B cell (primary cell): ENCODE measurements at regions of chr2 and their contacts with region 1.

Region 1: GRCh38 chr2:96174251-96175144 is 29.3 kb upstream of the DUSP2 start:
- DNase-seq: peak; percentile 85
- ATAC-seq: peak; percentile 99
- H3K4me3 ChIP-seq: no peak overlapping the region
- H3K4me3 Mint-ChIP-seq: no peak overlapping the region
- H3K27ac ChIP-seq: no peak overlapping the region
- H3K27ac Mint-ChIP-seq: no peak overlapping the region
- H3K4me1 ChIP-seq: peaks cover 0 to 3% of the 10 kb centered on the region in 2 donors
- H3K4me1 Mint-ChIP-seq: peaks cover 7% of the 10 kb centered on the region
- H3K27me3 ChIP-seq: no peaks in the 10 kb centered on the region
- H3K27me3 Mint-ChIP-seq: no peaks in the 10 kb centered on the region
- CTCF ChIP-seq: peak; percentile 99

Region 2: DNA sequence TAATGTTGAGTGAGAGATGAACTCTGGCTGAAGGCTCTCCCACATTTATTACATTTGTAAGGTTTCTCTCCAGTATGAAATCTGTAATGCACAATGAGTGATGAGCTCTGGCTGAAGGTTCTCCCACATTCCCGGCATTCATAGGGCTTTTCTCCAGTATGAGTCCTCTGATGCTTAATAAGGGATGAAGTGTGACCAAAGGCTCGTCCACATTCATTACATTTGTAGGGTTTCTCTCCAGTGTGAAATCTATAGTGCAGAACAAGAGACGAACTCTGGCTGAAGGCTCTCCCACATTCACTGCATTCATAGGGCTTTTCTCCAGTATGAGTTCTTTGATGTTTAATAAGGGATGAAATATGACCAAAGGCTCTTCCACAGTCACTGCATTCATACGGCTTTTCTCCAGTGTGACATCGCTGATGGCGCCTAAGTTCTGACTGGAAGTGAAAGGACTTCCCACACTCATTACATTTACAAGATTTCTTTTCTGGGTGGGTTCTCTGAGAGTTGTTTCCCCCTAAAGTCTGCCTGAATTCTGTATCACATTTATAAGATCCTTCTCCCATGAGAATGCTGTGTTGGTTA is 1025.0 kb before region 1 on chr2:
- CTCF ChIA-PET with region 1: no interaction called
- POLR2A ChIA-PET with region 1: no interaction called
- intact Hi-C with region 1: no loop called
- DNase-seq: no peak
- ATAC-seq: no peak
- H3K4me3 ChIP-seq: no peak overlapping the region
- H3K4me3 Mint-ChIP-seq: no peak overlapping the region
- H3K27ac ChIP-seq: no peak overlapping the region
- H3K27ac Mint-ChIP-seq: no peak overlapping the region
- H3K4me1 ChIP-seq: no peaks in the 10 kb centered on the region
- H3K4me1 Mint-ChIP-seq: no peaks in the 10 kb centered on the region
- H3K27me3 ChIP-seq: no peaks in the 10 kb centered on the region
- H3K27me3 Mint-ChIP-seq: no peaks in the 10 kb centered on the region
- CTCF ChIP-seq: no peak

Region 3: GRCh38 chr2:96024336-96025193 is 149.9 kb before region 1 on chr2:
- CTCF ChIA-PET with region 1: interaction called, 18 read pairs
- POLR2A ChIA-PET with region 1: no interaction called
- intact Hi-C with region 1: no loop called
- DNase-seq: no peak
- ATAC-seq: no peak
- H3K4me3 ChIP-seq: no peak overlapping the region
- H3K4me3 Mint-ChIP-seq: no peak overlapping the region
- H3K27ac ChIP-seq: no peak overlapping the region
- H3K27ac Mint-ChIP-seq: no peak overlapping the region
- H3K4me1 ChIP-seq: no peaks in the 10 kb centered on the region
- H3K4me1 Mint-ChIP-seq: peaks cover 3% of the 10 kb centered on the region
- H3K27me3 ChIP-seq: no peaks in the 10 kb centered on the region
- H3K27me3 Mint-ChIP-seq: no peaks in the 10 kb centered on the region
- CTCF ChIP-seq: no peak

Region 4: DNA sequence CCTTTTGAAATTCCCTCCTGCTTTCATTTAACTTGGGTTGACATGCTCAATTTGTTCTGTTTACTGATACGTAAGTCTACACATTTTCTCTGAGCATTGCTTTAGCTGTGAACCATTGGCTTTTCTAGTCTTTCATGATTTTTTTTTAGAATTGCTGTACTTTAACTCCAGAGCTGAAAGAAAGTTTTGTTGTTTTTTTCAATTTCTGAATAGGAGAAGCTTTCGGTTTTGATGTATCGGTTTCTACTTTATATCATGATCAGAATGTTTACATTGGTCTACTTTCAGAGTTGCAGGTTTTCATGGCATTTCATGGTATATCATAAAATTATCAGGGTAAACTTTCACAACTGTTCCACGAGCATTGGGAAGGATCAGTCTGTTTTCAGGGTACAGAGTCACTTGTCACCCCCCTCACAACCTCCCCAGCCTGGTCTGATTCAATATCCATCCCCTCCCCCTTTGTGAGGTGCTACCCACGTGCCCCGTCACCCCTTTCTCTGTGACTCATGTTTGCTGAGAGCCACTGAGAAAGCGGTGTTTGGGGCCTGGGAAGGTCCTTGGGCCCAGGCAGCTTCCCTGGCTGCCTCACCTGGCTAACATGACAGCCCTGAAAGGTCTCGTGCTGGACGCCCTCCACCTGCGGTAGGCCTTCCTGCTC is 43.2 kb before region 1 on chr2:
- CTCF ChIA-PET with region 1: interaction called, 1,065 read pairs
- POLR2A ChIA-PET with region 1: no interaction called
- intact Hi-C with region 1: no loop called
- DNase-seq: no peak
- ATAC-seq: no peak
- H3K4me3 ChIP-seq: no peak overlapping the region
- H3K4me3 Mint-ChIP-seq: no peak overlapping the region
- H3K27ac ChIP-seq: no peak overlapping the region
- H3K27ac Mint-ChIP-seq: no peak overlapping the region
- H3K4me1 ChIP-seq: no peaks in the 10 kb centered on the region
- H3K4me1 Mint-ChIP-seq: no peaks in the 10 kb centered on the region
- H3K27me3 ChIP-seq: no peaks in the 10 kb centered on the region
- H3K27me3 Mint-ChIP-seq: no peaks in the 10 kb centered on the region
- CTCF ChIP-seq: no peak

Region 5: DNA sequence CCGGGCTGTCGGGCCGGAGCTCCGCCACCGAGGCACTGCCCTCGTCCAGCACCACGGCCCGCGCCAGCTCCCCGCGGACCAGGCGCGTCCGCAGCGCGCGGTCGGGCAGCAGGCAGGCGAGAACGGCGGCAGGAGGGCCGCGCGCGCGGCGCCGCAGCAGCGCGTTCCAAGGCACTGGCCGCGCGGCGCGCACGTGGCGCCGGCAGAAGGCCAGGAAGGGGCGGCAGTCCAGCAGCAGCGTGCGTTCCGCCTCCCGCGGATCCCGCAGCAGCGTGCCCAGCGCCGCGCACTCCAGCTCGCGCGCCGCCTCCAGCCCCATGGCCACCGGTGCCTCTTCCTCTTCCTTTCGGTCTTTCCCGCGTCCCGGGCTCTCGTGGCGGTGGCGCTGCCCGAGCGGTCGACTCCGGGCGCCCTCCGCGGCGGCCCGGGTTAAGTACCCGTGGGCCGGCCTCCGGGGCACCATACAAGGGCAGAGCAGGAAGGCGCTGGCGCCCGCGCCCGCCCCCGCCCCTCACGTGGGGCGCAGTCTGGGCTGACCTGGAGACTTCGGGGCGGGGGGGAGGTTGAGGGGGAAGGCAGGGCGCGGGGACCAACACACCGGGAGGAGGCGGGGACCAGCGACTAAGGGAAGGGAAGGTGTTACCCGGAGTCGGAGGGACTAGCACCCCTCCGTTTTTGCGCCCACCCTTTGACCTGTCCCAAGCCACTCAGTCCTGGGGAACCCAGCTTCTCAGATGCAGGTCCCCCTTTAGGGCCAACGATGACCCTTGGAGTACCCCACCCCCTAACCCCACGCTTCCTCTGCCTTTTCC is 29.3 kb before region 1 on chr2 and contains the start of gene DUSP2:
- CTCF ChIA-PET with region 1: interaction called, 1,065 read pairs
- POLR2A ChIA-PET with region 1: interaction called, 7 read pairs
- intact Hi-C with region 1: no loop called
- DNase-seq: peak; percentile 95
- ATAC-seq: peak; percentile 56
- H3K4me3 ChIP-seq: peak within 1 kb of the TSS; percentile 42 to 71 (median 59)
- H3K4me3 Mint-ChIP-seq: peak within 1 kb of the TSS; percentile 92
- H3K27ac ChIP-seq: peak within 1 kb of the TSS; percentile 95 to 97
- H3K27ac Mint-ChIP-seq: peak within 1 kb of the TSS; percentile 98
- H3K4me1 ChIP-seq: peaks cover 53 to 66% of the 10 kb centered on the region in 2 donors
- H3K4me1 Mint-ChIP-seq: peaks cover 69% of the 10 kb centered on the region
- H3K27me3 ChIP-seq: no peaks in the 10 kb centered on the region
- H3K27me3 Mint-ChIP-seq: no peaks in the 10 kb centered on the region
- CTCF ChIP-seq: no peak
- total RNA-seq, gene DUSP2: 69.8 and 74.9 TPM in 2 replicates

Region 6: DNA sequence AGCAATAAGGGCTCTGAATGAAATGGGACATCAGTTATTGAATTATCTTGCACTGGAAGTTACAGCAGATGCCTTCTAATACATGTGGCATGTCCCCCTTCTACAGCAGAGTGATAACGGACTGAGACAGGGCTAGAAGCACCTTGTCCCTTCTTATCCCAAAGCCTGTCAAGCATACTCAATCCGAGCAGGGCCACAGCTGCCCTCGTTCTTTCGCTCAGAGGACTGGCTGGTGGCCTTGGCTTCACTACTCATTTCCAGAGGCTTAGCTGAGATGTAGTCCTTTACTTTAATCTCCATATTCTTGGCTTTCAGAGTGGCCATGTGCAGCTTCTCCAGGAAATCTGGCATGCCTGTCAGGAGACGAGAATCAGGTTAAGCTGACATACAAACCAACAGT is 12.1 kb after region 1 on chr2:
- CTCF ChIA-PET with region 1: interaction called, 13 read pairs
- POLR2A ChIA-PET with region 1: interaction called, 9 read pairs
- intact Hi-C with region 1: no loop called
- DNase-seq: no peak
- ATAC-seq: no peak
- H3K4me3 ChIP-seq: no peak overlapping the region
- H3K4me3 Mint-ChIP-seq: no peak overlapping the region
- H3K27ac ChIP-seq: no peak overlapping the region
- H3K27ac Mint-ChIP-seq: no peak overlapping the region
- H3K4me1 ChIP-seq: no peaks in the 10 kb centered on the region
- H3K4me1 Mint-ChIP-seq: peaks cover 3% of the 10 kb centered on the region
- H3K27me3 ChIP-seq: no peaks in the 10 kb centered on the region
- H3K27me3 Mint-ChIP-seq: no peaks in the 10 kb centered on the region
- CTCF ChIP-seq: no peak

Region 7: GRCh38 chr2:96208143-96209010 is 33.9 kb after region 1 on chr2 and contains the start of gene STARD7:
- CTCF ChIA-PET with region 1: interaction called, 26 read pairs
- POLR2A ChIA-PET with region 1: no interaction called
- intact Hi-C with region 1: no loop called
- DNase-seq: peak; percentile 97
- ATAC-seq: peak; percentile 86
- H3K4me3 ChIP-seq: peak within 1 kb of the TSS; percentile 84 to 91 (median 89)
- H3K4me3 Mint-ChIP-seq: peak within 1 kb of the TSS; percentile 95
- H3K27ac ChIP-seq: peak within 1 kb of the TSS; percentile 75 to 79
- H3K27ac Mint-ChIP-seq: peak within 1 kb of the TSS; percentile 91
- H3K4me1 ChIP-seq: peaks cover 46 to 65% of the 10 kb centered on the region in 2 donors
- H3K4me1 Mint-ChIP-seq: peaks cover 63% of the 10 kb centered on the region
- H3K27me3 ChIP-seq: no peaks in the 10 kb centered on the region
- H3K27me3 Mint-ChIP-seq: no peaks in the 10 kb centered on the region
- CTCF ChIP-seq: no peak
- total RNA-seq, gene STARD7: 132 and 133 TPM in 2 replicates

Region 8: DNA sequence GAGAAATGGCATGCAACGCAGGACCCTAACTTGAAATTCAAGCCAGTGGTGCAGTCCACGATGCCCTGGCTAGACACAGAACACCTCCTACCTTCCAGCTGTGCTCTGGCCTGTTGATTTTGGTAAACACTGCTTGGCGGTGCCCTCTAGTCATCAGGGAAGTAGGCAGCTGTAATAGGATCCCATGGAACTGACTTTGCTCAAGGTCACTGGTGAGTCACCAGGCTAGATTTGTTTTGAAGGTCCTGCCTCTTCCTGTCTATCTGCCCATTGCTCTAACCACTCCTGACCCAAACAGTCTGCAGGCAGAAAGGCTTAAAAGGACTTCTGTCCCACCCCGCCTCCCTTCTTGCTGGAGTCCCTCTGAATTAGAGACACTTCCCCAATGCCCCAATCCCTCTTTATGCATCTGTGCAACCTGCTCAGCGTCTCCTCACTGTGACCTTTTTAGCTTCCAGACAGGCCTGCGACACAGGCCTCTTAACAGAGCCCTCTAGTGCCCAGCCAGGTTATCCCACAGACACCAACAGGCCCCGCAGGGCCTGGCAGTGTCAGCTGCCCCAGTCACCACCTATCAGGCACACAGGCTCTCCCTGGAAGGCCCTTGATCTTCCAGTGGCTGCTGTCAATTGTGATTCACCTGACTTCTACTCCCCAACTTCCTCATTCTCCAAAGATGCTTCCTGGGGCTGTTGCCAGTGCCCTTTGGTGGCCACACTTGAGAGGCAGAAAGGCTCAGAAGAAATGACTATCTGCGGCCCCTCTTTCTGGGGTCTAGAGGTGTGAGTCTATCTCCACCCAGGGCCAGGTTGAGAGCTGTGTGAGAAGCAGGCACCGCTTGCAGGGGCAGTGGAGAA is 86.1 kb after region 1 on chr2:
- CTCF ChIA-PET with region 1: interaction called, 30 read pairs
- POLR2A ChIA-PET with region 1: no interaction called
- intact Hi-C with region 1: no loop called
- DNase-seq: peak; percentile 62
- ATAC-seq: peak; percentile 55
- H3K4me3 ChIP-seq: no peak overlapping the region
- H3K4me3 Mint-ChIP-seq: peak overlapping the region; percentile 64
- H3K27ac ChIP-seq: peak overlapping the region; percentile 44 to 64
- H3K27ac Mint-ChIP-seq: peak overlapping the region; percentile 92
- H3K4me1 ChIP-seq: peaks cover 65 to 75% of the 10 kb centered on the region in 2 donors
- H3K4me1 Mint-ChIP-seq: peaks cover 78% of the 10 kb centered on the region
- H3K27me3 ChIP-seq: no peaks in the 10 kb centered on the region
- H3K27me3 Mint-ChIP-seq: no peaks in the 10 kb centered on the region
- CTCF ChIP-seq: peak; percentile 29